ENCODE measurements at regions of chr12 and their contacts with region 1.

Region 1: DNA sequence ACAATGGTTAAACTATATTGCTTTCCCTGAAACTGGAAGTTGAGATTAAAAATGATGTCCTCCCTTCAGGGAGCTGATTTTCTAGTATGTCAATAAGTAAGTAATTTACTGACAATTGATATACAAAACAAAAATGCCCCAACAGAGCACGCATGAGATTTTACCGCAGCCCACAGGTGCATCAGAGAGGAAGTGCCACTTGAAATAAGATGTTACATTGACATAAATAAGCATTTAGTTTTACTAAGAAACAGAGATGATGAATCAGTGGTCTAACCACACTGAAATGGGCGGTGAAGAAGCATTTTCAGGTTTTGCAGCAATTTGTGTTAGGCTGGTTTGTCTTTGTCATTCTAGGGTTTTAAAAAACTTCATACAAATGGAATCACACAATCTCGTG is 8.8 kb upstream of the CLECL1 start:
- DNase-seq: peak; percentile 91
- H3K4me3 Mint-ChIP-seq: peak overlapping the region; percentile 70
- H3K27ac Mint-ChIP-seq: peak overlapping the region; percentile 60
- H3K4me1 Mint-ChIP-seq: peaks cover 66% of the 10 kb centered on the region
- H3K27me3 Mint-ChIP-seq: no peaks in the 10 kb centered on the region

Region 2: DNA sequence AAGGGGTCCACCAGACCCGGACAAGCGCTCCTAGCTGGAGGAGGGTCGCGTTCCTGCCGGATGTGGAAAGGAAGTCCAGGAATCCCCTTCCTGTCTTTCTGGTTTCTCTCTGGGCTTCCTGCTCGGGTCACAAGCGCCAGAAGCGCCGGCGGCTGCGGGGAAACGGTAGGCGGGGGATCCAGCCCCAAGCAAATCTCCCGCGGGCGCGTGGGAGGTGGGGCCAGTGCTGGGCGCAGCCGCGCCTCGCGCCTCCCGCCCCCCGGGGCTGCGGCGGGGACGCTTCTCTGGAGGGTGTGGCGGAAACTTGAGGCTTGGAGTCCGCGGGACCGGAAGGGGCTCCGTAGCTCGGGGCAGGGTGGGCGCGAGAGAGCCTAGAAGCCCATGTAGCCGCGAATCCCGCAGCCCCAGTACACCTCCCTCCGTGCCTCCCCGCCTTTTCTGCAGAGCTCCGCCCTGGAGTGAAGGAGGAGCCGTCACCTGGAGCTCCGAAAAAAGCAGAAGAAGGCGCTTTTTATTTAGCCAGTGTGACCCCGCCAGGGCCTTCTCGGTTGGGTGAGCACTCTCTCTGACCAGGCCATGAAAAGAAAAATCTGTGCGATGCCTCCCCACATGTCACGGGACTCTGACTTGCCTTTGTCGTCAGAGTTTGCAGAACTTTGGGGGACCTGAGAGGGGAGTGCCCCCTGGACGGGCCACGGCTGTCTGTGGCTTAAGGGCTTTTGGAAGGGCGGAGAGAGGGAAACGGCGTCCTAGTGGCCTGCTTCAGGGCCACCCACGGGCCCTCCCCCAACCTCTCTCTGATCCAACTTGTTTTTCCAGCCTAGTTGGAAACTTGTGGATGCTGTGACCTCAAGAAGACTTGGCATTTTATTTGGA is 93.7 kb before region 1 on chr12:
- CTCF ChIA-PET with region 1: interaction called, 5 read pairs
- intact Hi-C with region 1: loop called (anchors 1 kb)
- DNase-seq: peak; percentile 93
- H3K4me3 Mint-ChIP-seq: peak overlapping the region; percentile 95
- H3K27ac Mint-ChIP-seq: peak overlapping the region; percentile 99
- H3K4me1 Mint-ChIP-seq: peaks cover 47% of the 10 kb centered on the region
- H3K27me3 Mint-ChIP-seq: no peaks in the 10 kb centered on the region

Region 3: GRCh38 chr12:9760699-9761418 is 19.1 kb after region 1 on chr12 and contains the start of gene CD69:
- CTCF ChIA-PET with region 1: interaction called, 4 read pairs
- intact Hi-C with region 1: loop called (anchors 1 kb)
- DNase-seq: peak; percentile 88
- H3K4me3 Mint-ChIP-seq: peak within 1 kb of the TSS; percentile 95
- H3K27ac Mint-ChIP-seq: peak within 1 kb of the TSS; percentile 99
- H3K4me1 Mint-ChIP-seq: peaks cover 36% of the 10 kb centered on the region
- H3K27me3 Mint-ChIP-seq: no peaks in the 10 kb centered on the region
- total RNA-seq, gene CD69: 150 to 153 TPM

Region 4: DNA sequence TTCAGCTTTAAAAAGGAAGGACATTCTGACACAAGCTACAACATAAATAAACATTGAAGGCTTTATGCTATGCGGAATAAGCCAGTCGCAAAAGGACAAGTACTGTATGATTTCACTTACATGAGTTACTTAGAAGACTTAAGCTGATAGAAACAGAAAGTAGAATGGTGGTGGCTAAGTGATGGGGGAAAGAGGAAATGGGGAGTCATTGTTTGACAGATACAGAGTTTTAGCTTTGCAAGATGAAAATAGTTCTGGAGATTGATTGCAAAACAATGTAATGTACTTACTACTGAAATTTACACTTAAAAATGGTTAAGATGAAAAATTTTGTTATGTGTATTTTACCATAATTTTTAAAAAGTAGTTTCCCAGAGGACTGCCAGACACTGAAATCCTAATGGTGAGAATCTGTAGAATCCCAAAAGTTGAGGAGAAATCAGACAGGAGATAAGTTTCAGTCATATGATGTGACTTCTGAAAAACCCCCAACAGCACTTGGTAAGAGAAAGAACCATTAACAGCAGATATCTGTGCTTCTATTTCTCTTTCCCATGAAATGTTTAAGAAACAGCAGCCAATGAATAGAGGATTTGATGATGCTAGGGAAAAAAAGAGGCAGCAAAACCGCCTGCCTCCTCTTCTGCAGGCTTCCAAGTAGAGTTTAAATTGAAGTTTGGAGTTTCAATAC is 207.0 kb after region 1 on chr12:
- CTCF ChIA-PET with region 1: no interaction called
- intact Hi-C with region 1: loop called (anchors 2 kb)
- DNase-seq: peak; percentile 20
- H3K4me3 Mint-ChIP-seq: no peak overlapping the region
- H3K27ac Mint-ChIP-seq: no peak overlapping the region
- H3K4me1 Mint-ChIP-seq: peaks cover 48% of the 10 kb centered on the region
- H3K27me3 Mint-ChIP-seq: no peaks in the 10 kb centered on the region

Region 5: DNA sequence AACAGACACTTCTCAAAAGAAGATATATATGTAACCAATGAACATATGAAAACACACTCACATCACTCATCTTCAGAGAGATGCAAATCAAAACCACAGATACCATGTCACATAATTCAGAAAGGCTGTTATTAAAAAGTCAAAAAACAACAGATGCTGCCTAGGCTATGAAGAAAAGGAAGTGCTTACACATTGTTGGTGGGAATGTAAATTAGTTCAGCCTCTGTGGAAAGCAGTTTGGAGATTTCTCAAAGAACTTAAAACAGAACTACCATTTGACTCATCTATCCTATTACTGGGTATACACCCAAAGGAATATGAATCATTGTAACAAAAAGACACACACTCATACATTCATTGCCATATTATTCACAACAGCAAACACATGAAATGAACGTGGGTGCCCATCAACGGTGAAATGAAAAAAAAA is 799.1 kb after region 1 on chr12:
- CTCF ChIA-PET with region 1: no interaction called
- intact Hi-C with region 1: loop called (anchors 2 kb)
- DNase-seq: no peak
- H3K4me3 Mint-ChIP-seq: no peak overlapping the region
- H3K27ac Mint-ChIP-seq: peak overlapping the region; percentile 22
- H3K4me1 Mint-ChIP-seq: peaks cover 15% of the 10 kb centered on the region
- H3K27me3 Mint-ChIP-seq: peaks cover 36% of the 10 kb centered on the region